ENCODE measurements at regions of chr4 and their contacts with region 1.

Region 1: GRCh38 chr4:154618708-154619315 is 6.4 kb upstream of the FGG start:
- DNase-seq: peak; percentile 8
- H3K4me3 ChIP-seq: no peak overlapping the region
- H3K27ac ChIP-seq: no peak overlapping the region
- H3K27me3 ChIP-seq: peaks cover 2% of the 10 kb centered on the region
- CTCF ChIP-seq: peak; percentile 84

Region 2: DNA sequence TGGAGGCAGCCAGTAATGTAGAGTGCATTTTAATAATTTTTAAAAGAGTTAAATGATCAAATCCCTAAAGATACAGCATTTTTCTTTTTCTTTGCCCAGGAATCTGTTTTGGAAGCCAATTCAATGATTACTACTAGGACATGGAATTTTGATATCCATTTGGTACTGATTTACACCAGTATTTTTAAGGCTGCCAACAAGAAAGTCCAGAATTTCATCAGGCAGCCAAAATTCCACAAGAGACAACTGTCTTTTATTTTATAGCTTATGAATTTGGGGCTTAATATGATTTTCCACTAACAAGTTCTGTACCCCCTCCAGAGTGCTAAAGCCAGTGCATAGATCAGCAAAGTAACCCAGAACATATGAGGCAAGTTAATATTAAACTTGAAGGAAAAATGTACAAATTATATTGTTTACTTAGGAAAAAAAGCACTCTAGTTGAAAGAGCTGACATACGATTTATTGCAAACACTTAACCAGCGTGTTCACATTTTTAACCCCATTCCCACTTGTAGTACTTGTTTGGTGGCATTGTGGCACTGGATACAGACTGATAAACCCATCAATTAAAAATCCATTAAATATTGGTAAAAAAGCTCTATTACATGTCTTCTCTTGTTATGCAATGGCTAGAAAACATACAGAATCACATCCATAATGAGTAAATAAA is 386.9 kb before region 1 on chr4:
- CTCF ChIA-PET with region 1: no interaction called
- POLR2A ChIA-PET with region 1: no interaction called
- DNase-seq: no peak
- H3K4me3 ChIP-seq: no peak overlapping the region
- H3K27ac ChIP-seq: no peak overlapping the region
- H3K27me3 ChIP-seq: no peaks in the 10 kb centered on the region
- CTCF ChIP-seq: no peak

Region 3: DNA sequence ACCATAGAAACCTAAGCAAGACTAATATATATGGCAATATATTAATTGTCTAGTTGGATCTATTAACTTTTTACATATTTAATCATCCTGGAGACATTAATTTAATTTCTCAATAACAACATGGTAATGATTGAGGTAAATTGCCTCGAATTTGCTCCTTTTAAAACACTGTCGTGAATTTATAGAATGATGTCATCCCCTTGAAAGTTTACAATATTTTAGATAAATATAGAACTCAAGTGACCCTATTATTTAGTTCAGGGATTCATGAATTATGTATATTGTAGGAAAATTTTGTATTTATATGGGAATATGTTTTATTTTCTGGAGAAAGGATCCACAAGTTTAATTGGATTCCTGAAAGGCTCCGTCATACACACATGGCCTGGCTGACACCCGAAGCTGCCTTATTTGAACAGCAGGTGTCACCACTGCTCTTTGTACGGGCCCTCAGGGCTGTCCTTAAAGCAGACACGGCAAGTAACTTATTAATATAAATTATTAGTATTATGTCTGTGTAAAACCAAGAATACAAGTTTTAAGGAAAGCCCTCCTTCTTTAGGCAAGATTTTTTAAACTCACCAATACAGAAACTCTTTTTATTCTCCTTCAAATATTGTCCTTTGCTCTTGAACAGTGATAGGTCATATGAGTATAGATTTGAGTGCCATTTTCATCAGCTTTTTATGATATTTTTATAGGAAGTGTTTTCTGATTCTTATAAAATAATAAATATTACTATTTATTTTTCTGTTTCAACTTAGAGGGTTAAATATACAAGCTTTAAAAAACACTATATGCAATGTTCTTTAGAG is 66.7 kb before region 1 on chr4:
- CTCF ChIA-PET with region 1: interaction called, 183 read pairs
- POLR2A ChIA-PET with region 1: no interaction called
- DNase-seq: peak; percentile 65
- H3K4me3 ChIP-seq: no peak overlapping the region
- H3K27ac ChIP-seq: no peak overlapping the region
- H3K27me3 ChIP-seq: no peaks in the 10 kb centered on the region
- CTCF ChIP-seq: peak; percentile 77

Region 4: GRCh38 chr4:154566639-154567204 is 52.1 kb before region 1 on chr4:
- CTCF ChIA-PET with region 1: interaction called, 32 read pairs
- POLR2A ChIA-PET with region 1: no interaction called
- DNase-seq: no peak
- H3K4me3 ChIP-seq: no peak overlapping the region
- H3K27ac ChIP-seq: no peak overlapping the region
- H3K27me3 ChIP-seq: no peaks in the 10 kb centered on the region
- CTCF ChIP-seq: no peak

Region 5: GRCh38 chr4:154589296-154590197 is 29.3 kb before region 1 on chr4:
- CTCF ChIA-PET with region 1: interaction called, 16 read pairs
- POLR2A ChIA-PET with region 1: no interaction called
- DNase-seq: no peak
- H3K4me3 ChIP-seq: no peak overlapping the region
- H3K27ac ChIP-seq: no peak overlapping the region
- H3K27me3 ChIP-seq: no peaks in the 10 kb centered on the region
- CTCF ChIP-seq: no peak

Region 6: GRCh38 chr4:154634058-154634457 is 15.2 kb after region 1 on chr4:
- CTCF ChIA-PET with region 1: interaction called, 20 read pairs
- POLR2A ChIA-PET with region 1: no interaction called
- DNase-seq: no peak
- H3K4me3 ChIP-seq: no peak overlapping the region
- H3K27ac ChIP-seq: no peak overlapping the region
- H3K27me3 ChIP-seq: no peaks in the 10 kb centered on the region
- CTCF ChIP-seq: no peak

Measured in AG04450 (cell line).